Calu3 (cell line): ENCODE measurements at regions of chr10 and their contacts with region 1.

Region 1: GRCh38 chr10:4767033-4767814 is 58.8 kb upstream of the AKR1E2 start:
- DNase-seq: peak; percentile 30
- H3K4me3 Mint-ChIP-seq: no peak overlapping the region
- H3K27ac Mint-ChIP-seq: peak overlapping the region; percentile 89
- H3K4me1 Mint-ChIP-seq: peaks cover 75% of the 10 kb centered on the region
- H3K27me3 Mint-ChIP-seq: no peaks in the 10 kb centered on the region
- CTCF ChIP-seq: peak; percentile 25

Region 2: DNA sequence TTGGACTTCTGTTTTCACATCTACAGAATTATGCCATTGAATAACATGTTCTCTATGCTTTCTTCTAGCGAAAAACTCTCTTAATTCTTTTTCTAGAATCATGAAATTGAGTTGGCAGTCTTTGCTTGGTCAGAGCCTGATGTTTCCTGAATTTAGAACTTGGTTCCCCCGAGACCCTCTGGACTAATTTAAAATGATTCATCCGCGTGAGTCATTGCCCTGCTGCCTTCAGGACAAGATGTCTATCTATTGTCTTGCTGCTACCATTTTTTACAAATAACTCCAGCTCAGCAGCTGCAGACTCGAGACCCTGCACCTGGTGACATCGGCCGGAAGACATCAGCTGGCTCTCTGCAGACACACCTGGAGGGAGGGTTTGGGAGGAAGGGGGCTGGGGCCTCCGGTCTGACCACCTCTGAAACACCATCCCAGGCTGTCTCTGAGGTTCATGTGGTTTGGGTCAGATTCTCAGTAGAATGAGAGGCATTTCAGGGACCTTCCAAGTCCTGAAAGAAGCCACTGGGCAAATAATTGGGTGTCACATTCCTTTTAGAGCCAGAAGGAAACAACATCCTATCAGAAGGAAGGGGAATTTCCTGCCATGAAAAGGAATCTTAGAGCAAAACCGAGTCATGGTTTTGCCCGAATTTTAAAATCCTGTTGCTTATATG is 961.3 kb before region 1 on chr10:
- CTCF ChIA-PET with region 1: no interaction called
- intact Hi-C with region 1: loop called (anchors 10 kb)
- DNase-seq: peak; percentile 57
- H3K4me3 Mint-ChIP-seq: peak overlapping the region; percentile 48
- H3K27ac Mint-ChIP-seq: peak overlapping the region; percentile 85
- H3K4me1 Mint-ChIP-seq: peaks cover 54% of the 10 kb centered on the region
- H3K27me3 Mint-ChIP-seq: no peaks in the 10 kb centered on the region
- CTCF ChIP-seq: no peak

Region 3: DNA sequence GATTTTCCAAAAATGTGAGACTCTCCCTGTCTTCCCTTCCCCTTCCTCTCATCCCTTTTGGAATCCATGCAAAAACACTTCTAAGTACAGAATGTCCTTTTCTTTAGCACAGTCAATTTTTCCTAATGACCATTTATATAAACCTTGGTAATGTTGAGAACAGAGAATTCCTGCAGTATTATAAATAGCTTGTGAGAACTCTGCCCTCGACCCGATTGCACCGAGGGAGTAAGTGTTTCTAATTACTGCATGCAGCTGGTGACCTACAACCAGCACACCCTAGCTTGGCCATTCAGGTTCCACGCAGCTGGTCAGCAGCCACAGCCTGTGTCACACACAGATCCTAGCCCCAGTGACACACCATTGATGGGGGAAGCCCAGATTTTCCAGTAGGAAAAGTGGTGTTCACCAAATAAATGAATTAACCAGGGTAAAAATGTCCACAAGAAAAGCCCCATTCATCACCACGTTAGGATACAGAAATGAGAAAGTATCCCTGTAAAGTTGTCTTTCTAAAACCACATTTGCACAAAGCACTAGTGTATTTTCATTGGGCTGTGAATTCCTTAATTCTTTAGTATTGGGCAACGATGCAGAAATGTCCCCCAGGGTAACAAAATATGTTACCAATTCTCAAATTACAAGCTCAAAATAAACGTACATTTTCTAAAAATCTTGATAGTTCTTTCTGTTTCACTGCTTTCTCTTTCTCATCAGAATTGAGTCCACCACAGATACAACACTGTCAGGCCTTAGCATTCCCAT is 483.2 kb before region 1 on chr10:
- CTCF ChIA-PET with region 1: no interaction called
- intact Hi-C with region 1: loop called (anchors 10 kb)
- DNase-seq: no peak
- H3K4me3 Mint-ChIP-seq: no peak overlapping the region
- H3K27ac Mint-ChIP-seq: no peak overlapping the region
- H3K4me1 Mint-ChIP-seq: peaks cover 34% of the 10 kb centered on the region
- H3K27me3 Mint-ChIP-seq: no peaks in the 10 kb centered on the region
- CTCF ChIP-seq: no peak

Region 4: DNA sequence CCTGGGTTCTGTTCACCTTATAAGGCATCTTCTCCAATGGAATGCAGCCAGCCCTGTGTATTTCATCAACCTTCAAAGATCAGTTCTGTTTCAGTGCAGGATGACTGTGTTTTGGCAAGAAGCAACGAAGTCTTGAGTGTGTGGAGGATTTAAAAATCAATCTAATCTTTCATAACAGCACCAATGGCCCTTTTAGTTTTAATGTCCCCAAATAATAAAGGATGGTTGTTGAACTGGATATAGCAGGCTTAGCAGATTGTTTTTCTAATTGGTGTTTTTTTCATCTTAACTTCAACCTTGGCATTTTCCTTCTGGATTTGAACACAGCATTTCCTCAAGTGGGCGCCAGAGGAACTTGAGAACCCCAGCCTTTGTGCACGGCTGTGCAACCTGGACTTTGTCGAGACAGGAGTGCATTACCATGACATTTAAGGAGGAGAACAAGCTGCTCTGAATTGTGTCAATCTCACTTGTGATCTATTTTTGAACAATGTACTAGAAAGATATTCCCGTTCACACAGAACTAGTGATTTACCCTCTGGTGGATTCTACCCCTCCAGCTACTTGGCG is 254.5 kb before region 1 on chr10:
- CTCF ChIA-PET with region 1: interaction called, 4 read pairs
- intact Hi-C with region 1: loop called (anchors 1 kb)
- DNase-seq: peak; percentile 59
- H3K4me3 Mint-ChIP-seq: no peak overlapping the region
- H3K27ac Mint-ChIP-seq: no peak overlapping the region
- H3K4me1 Mint-ChIP-seq: peaks cover 24% of the 10 kb centered on the region
- H3K27me3 Mint-ChIP-seq: no peaks in the 10 kb centered on the region
- CTCF ChIP-seq: peak; percentile 62

Region 5: DNA sequence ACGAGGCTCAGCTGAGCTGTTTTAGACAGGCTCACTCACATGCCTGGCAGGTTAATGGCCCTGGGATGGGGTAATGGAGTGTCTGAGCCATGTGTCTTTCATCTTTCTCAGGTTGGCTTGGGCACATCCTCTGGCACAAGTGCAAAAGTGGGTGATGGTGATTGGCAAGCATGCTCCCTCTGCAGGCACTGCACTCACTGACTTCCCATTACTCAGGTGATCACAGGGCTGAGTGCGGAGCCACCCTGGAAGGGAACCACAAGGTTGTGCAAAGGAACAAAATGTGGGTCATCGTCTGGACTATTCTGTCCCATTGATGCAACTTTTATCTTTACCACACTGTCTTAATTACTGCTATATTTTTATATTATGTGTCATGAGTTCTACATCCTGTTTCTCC is 185.3 kb before region 1 on chr10:
- CTCF ChIA-PET with region 1: no interaction called
- intact Hi-C with region 1: no loop called
- DNase-seq: no peak
- H3K4me3 Mint-ChIP-seq: no peak overlapping the region
- H3K27ac Mint-ChIP-seq: no peak overlapping the region
- H3K4me1 Mint-ChIP-seq: no peaks in the 10 kb centered on the region
- H3K27me3 Mint-ChIP-seq: no peaks in the 10 kb centered on the region
- CTCF ChIP-seq: no peak

Region 6: DNA sequence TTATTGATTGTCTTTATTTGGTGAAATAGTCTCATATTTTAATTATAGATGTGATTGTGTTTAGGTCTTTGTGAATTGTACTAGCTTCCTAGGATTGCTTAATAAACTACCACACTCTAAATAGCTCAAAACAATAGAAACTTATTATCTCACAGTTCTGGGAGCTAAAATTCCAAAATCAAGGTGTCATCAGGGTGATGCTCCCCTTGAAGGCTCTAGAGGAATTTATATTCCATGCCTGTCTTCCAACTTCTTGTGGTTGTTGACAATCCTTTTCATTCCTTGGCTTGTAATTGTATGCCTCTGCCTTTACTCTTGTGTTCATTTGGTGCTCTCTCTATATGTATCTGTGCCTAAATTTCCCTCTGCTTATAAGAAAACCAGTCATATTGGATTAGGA is 96.5 kb before region 1 on chr10:
- CTCF ChIA-PET with region 1: interaction called, 9 read pairs
- intact Hi-C with region 1: loop called (anchors 2 kb)
- DNase-seq: no peak
- H3K4me3 Mint-ChIP-seq: peak overlapping the region; percentile 75
- H3K27ac Mint-ChIP-seq: peak overlapping the region; percentile 96
- H3K4me1 Mint-ChIP-seq: peaks cover 51% of the 10 kb centered on the region
- H3K27me3 Mint-ChIP-seq: no peaks in the 10 kb centered on the region
- CTCF ChIP-seq: no peak

Region 7: DNA sequence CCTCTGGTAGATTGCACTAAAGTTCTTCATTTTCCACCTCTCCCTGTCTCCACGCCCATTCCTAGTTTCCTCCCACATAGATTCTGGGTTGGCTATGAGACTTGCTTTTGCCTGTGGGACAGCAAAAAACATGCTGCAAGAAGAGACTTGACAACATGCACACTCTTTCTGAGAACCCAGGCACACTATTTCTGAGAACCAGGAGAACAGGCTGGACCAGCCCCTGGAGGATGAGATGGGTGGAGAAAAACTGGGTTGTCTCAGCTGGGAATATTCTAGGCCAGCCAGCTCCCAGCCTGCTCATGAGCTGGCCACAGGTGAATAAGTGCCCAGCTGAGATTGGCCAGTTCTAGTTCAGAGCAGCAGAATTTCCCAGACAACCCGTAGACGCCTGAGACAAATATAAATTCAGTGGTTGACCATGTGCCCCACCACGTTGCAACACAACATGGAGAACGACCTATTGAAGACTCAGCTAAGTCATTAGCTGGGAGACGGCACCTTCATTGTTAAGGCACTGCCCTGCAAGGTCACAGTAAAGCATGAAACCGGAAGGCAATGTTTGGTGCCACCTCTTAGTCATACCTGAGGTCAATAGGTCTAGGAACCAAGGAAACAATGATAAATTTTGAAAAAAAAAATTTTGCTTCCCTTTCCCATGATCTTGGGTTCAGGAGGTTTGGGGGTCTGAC is 33.9 kb before region 1 on chr10:
- CTCF ChIA-PET with region 1: interaction called, 6 read pairs
- intact Hi-C with region 1: loop called (anchors 2 kb)
- DNase-seq: peak; percentile 81
- H3K4me3 Mint-ChIP-seq: peak overlapping the region; percentile 61
- H3K27ac Mint-ChIP-seq: peak overlapping the region; percentile 99
- H3K4me1 Mint-ChIP-seq: peaks cover 54% of the 10 kb centered on the region
- H3K27me3 Mint-ChIP-seq: no peaks in the 10 kb centered on the region
- CTCF ChIP-seq: no peak

Region 8: DNA sequence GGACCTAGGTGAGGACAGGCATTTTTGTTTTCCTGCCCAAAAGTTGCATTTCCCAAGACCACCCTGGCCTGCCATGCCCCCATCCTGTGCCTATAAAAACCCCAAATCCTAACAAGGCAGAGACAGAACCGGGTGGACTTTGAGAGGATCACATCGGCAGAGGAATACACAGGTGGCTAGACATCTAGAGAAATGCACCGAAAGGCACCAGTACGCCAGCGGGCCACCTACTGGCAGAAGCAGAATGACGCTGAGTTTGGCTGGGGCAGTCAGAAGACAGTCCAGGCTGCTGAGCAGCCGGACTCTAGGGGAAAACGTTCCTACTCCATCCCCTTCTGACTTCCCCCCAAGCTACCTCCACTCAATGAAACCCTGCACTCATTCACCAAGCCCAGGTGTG is 432.2 kb after region 1 on chr10:
- CTCF ChIA-PET with region 1: no interaction called
- intact Hi-C with region 1: no loop called
- DNase-seq: no peak
- H3K4me3 Mint-ChIP-seq: no peak overlapping the region
- H3K27ac Mint-ChIP-seq: no peak overlapping the region
- H3K4me1 Mint-ChIP-seq: peaks cover 18% of the 10 kb centered on the region
- H3K27me3 Mint-ChIP-seq: no peaks in the 10 kb centered on the region
- CTCF ChIP-seq: no peak